PC-9 (cell line): ENCODE measurements at regions of chr4 and their contacts with region 1.

Region 1: GRCh38 chr4:43369036-43369594 is 476.6 kb downstream of the GRXCR1 start:
- DNase-seq: no peak
- H3K4me3 ChIP-seq: no peak overlapping the region
- H3K27ac ChIP-seq: no peak overlapping the region
- H3K4me1 ChIP-seq: no peaks in the 10 kb centered on the region
- H3K27me3 ChIP-seq: no peaks in the 10 kb centered on the region
- CTCF ChIP-seq: no peak

Region 2: GRCh38 chr4:41927761-41928477 is 1441.2 kb before region 1 on chr4:
- CTCF ChIA-PET with region 1: no interaction called
- POLR2A ChIA-PET with region 1: no interaction called
- intact Hi-C with region 1: no loop called
- DNase-seq: peak; percentile 47 to 60
- H3K4me3 ChIP-seq: no peak overlapping the region
- H3K27ac ChIP-seq: 0 out of 2 replicates have a peak overlapping the region, but pooled peaks have one; percentile 32
- H3K4me1 ChIP-seq: peaks cover 24% of the 10 kb centered on the region
- H3K27me3 ChIP-seq: no peaks in the 10 kb centered on the region
- CTCF ChIP-seq: no peak

Region 3: GRCh38 chr4:42453612-42454011 is 915.5 kb before region 1 on chr4:
- CTCF ChIA-PET with region 1: no interaction called
- POLR2A ChIA-PET with region 1: interaction called, 11 read pairs
- intact Hi-C with region 1: no loop called
- DNase-seq: no peak
- H3K4me3 ChIP-seq: no peak overlapping the region
- H3K27ac ChIP-seq: no peak overlapping the region
- H3K4me1 ChIP-seq: no peaks in the 10 kb centered on the region
- H3K27me3 ChIP-seq: peaks cover 30% of the 10 kb centered on the region
- CTCF ChIP-seq: no peak

Region 4: DNA sequence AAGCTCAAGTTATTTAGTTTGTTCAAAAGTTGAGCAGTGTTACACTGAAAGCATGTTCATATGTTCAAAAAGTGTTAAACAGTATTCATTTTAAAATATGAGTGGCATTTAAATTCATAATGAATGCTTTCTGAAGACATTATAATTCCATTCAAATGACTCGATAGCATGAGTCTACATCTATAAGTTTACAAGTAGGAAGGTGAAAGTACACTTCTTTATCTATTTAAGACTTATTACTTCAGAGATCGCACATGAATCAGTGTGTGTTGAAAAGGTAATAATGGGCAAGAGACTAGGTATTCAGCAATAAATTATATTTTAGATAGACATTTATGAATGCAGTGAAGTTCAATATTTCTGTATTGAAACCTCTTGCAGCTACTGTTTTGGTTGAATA is 20.5 kb before region 1 on chr4:
- CTCF ChIA-PET with region 1: no interaction called
- POLR2A ChIA-PET with region 1: no interaction called
- intact Hi-C with region 1: no loop called
- DNase-seq: no peak
- H3K4me3 ChIP-seq: no peak overlapping the region
- H3K27ac ChIP-seq: no peak overlapping the region
- H3K4me1 ChIP-seq: no peaks in the 10 kb centered on the region
- H3K27me3 ChIP-seq: no peaks in the 10 kb centered on the region
- CTCF ChIP-seq: no peak